Activated CD4-positive, alpha-beta memory T cell treated with anti-CD3 and anti-CD28 coated beads, Interleukin-2, amount 10 ng/mL, durations not matched to agents 7 days and 5 days (primary cell): ENCODE measurements at regions of chr5 and their contacts with region 1.

Region 1: DNA sequence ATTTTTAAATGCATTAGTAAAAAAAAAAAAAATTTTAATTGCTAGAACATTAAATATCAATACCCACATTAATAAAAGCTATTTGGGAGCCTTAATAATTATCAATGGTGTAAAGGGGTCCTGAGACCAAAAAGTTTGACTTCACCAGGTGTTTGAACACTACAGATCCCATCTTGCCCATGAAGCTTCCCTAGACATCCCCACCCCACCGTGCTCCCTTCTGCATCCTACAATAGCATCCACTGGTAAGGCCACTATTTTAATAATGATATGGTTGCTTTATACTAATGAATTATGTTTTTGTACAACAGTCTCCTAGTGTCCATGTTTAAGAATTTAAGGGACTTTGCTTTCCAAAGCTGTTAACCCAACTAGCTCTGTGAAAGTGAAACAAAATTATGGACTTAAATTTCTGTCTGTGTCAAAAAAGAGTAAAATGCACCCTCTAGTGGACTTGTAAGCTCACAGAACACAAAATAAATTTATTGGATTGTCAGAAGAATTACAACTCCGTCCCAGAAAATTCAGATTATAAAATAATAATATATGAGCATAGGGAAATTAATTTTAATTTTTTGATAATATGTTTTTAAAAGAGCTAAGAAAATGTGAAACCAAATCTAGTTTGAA is 76.0 kb downstream of the ARL15 start:
- DNase-seq: no peak
- H3K4me3 Mint-ChIP-seq: no peak overlapping the region
- H3K27ac Mint-ChIP-seq: no peak overlapping the region
- H3K4me1 Mint-ChIP-seq: peaks cover 3% of the 10 kb centered on the region
- H3K27me3 Mint-ChIP-seq: no peaks in the 10 kb centered on the region

Region 2: GRCh38 chr5:53478411-53479044 is 755.9 kb before region 1 on chr5:
- CTCF ChIA-PET with region 1: interaction called, 13 read pairs
- POLR2A ChIA-PET with region 1: no interaction called
- DNase-seq: no peak
- H3K4me3 Mint-ChIP-seq: peak overlapping the region; percentile 59
- H3K27ac Mint-ChIP-seq: no peak overlapping the region
- H3K4me1 Mint-ChIP-seq: peaks cover 35% of the 10 kb centered on the region
- H3K27me3 Mint-ChIP-seq: peaks cover 67% of the 10 kb centered on the region